RWPE1 (cell line): ENCODE measurements at regions of chr11 and their contacts with region 1.

Region 1: DNA sequence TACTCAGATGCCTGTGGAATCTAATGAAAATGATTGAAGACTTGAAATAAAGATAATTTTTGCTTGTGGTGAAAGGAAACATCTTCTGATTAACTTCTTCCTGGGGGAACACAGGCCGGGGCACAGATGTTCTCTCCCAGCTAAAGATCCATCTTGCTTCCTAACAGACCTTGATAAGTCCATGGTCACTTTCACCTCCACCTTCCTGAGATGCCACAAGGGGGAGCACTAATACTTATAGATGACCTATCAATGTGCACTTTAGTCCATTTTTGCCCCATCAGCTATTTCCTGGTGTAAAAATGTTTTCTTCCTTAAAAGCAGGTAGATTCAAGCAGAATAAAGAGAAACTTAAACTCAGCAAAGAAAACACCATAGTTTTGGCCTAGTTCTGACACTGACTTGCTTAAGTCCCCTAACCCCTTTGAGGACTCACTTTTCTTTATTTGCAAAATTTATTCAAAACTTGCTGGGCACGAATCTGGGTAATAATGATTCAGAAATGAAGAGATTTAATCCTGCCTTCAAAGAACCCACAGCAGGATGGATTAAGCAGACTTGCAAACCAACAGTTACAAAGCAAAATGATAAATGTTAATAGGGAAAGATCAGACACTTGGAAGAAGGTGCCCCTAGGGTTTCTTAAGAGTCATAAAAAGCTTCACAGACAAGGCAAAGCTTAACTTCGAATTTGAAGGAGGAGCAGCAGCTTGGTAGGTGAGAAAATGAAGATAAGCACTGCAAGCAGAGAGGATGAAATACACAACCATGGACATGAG is 158.7 kb downstream of the RAB38 start:
- DNase-seq: peak; percentile 36
- H3K27ac ChIP-seq: no peak overlapping the region
- CTCF ChIP-seq: peak; percentile 75

Region 2: DNA sequence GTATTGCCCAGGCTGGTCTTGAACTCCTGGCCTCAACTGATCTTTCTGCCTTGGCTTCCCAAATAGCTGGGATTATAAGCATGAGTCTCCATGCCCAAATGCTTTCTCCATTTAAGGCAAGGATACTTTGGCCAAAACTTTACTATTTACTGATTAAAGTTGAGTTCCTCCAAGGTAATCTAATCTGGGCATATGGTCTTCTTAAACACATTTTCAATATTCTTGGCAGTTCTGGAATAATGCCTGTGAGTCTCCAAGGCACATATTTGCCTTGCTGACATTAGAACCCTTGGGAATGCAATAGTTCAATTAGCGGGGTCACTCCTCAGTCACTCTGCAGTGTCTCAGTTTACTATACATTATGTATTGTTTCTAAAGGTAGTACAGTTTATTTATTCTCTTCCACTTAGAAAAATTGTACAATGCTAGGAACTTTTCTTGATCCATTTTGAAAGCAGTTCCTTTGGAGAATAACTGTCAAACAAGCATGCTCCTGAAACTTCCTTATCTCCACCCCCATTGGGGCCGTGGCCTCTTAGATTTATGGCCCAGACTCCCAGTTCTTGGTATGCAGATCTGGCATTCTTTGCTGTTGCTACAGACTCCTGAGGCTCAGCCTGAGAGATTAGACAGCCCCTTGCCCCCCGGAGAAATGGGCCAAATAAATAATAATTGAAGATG is 171.8 kb after region 1 on chr11:
- CTCF ChIA-PET with region 1: no interaction called
- POLR2A ChIA-PET with region 1: no interaction called
- DNase-seq: no peak
- H3K27ac ChIP-seq: no peak overlapping the region
- CTCF ChIP-seq: no peak

Region 3: DNA sequence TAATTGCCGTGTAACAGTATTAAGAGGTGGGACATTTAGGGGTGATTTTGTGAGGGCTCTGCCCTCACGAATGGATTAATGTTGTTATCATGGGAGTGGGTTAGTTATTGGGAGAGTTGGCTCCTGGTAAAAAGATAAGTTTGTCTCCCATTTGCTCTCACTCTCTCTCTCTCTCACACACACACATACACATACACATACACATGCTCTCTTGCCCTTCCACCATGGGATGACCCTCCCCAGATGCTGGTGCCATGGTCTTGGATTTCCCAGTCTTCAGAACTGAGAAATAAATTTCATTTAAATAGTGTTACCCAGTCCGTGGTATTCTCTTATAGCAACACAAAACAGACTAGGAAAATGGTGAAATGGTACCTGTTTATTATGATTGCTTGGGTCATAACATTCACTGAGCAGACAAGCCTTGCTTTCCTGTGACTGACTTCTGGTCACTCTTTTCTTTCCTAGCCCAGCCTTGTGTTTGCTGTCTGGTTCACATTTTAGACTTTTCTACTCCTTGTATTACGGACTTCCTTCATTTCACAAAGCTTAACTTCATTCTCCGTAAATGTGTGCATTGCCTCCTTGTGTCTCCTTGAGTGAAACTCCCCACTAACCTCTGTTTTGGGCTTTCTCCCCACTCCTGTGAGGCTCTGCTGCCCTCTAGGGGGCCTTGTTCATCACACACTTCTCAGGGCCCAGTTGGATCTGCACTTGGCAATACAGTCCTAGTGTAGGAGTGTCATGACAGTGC is 527.5 kb after region 1 on chr11:
- CTCF ChIA-PET with region 1: interaction called, 23 read pairs
- POLR2A ChIA-PET with region 1: no interaction called
- DNase-seq: peak; percentile 75
- H3K27ac ChIP-seq: no peak overlapping the region
- CTCF ChIP-seq: peak; percentile 96